PC-3 (cell line): ENCODE measurements at regions of chr19 and their contacts with region 1.

Region 1: GRCh38 chr19:48637170-48637947 is at the start of gene DBP:
- DNase-seq: peak; percentile 96
- ATAC-seq: peak; percentile 71
- H3K4me3 ChIP-seq: peak within 1 kb of the TSS; percentile 80
- H3K27ac ChIP-seq: peak within 1 kb of the TSS; percentile 67
- H3K4me1 ChIP-seq: peaks cover 24% of the 10 kb centered on the region
- H3K27me3 ChIP-seq: no peaks in the 10 kb centered on the region
- CTCF ChIP-seq: no peak
- total RNA-seq, gene DBP: 9.0 and 12.2 TPM in 2 replicates

Region 2: DNA sequence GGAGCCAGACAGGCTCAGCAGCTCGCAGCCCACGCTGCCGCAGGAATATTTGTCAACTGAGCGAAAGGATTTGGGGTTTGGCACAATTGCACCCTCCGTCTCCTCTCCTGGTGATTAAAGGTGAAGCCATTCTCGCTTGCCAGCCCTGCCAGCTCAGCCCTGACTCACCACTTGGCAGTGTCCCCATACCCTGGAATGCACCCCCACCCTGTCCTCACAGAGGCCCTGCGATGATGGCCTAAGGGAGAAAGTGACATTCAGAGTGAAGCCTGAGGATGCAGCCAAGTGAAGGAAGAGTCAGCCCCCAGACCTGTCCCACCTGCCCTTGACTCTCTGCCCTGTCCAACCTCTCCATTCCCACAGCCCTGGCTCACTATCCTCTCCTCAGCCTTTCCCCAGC is 149.4 kb before region 1 on chr19:
- CTCF ChIA-PET with region 1: no interaction called
- POLR2A ChIA-PET with region 1: interaction called, 20 read pairs
- intact Hi-C with region 1: no loop called
- DNase-seq: peak; percentile 97
- ATAC-seq: peak; percentile 56
- H3K4me3 ChIP-seq: peak overlapping the region; percentile 35; the same call in 1 of the 2 replicates
- H3K27ac ChIP-seq: peak overlapping the region; percentile 96
- H3K4me1 ChIP-seq: peaks cover 31% of the 10 kb centered on the region
- H3K27me3 ChIP-seq: no peaks in the 10 kb centered on the region
- CTCF ChIP-seq: no peak

Region 3: DNA sequence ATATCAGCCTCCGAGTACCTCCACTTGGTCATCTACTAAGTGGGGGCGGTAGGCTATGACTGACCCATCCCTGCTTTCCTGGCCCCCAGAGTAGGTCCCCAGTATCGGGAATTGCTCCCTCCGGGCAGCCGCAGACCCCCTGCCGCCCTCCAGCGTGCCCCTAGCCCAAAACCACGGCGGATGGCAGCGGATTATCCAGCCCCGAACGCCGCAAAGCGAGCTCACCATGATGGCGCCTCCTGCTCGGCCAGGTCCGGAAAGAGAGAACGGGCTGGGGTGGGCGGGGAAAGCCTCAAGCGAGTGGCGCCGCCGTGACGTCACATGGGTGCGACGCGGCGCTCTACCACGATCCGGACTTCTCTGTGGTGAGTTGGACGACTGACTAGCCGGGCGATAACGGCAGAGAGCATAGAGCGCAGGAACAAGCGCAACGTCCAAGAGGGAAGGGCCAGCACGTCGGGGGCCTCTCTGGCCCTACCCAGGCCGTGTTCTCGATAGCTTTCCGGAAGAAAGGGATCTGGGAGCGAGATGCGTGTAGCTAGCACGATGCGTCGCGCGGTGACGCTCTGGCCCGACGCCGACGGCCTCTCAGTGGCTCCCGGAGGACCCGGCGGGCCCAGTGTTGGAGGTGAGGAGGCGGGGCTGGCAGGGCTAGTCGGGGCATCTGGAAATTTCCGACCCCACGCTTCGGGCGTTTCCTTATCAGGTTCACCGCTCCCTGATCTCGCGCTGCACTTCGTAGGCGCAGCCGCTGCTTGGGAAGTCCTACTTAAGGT is 18.3 kb before region 1 on chr19 and contains the starts of genes RPL18 and SPHK2:
- CTCF ChIA-PET with region 1: no interaction called
- POLR2A ChIA-PET with region 1: interaction called, 5 read pairs
- intact Hi-C with region 1: loop called (anchors 1 kb)
- DNase-seq: peak; percentile 96
- ATAC-seq: peak; percentile 91
- H3K4me3 ChIP-seq: peak within 1 kb of the TSS; percentile 100
- H3K27ac ChIP-seq: peak within 1 kb of the TSS; percentile 47
- H3K4me1 ChIP-seq: peaks cover 27% of the 10 kb centered on the region
- H3K27me3 ChIP-seq: no peaks in the 10 kb centered on the region
- CTCF ChIP-seq: no peak
- total RNA-seq, gene RPL18: 1,237 and 1,503 TPM in 2 replicates
- total RNA-seq, gene SPHK2: 8.5 and 8.6 TPM in 2 replicates